Activated CD8-positive, alpha-beta T cell treated with anti-CD3 and anti-CD28 coated beads for 36 hours (primary cell): ENCODE measurements at regions of chr11 and their contacts with region 1.

Region 1: DNA sequence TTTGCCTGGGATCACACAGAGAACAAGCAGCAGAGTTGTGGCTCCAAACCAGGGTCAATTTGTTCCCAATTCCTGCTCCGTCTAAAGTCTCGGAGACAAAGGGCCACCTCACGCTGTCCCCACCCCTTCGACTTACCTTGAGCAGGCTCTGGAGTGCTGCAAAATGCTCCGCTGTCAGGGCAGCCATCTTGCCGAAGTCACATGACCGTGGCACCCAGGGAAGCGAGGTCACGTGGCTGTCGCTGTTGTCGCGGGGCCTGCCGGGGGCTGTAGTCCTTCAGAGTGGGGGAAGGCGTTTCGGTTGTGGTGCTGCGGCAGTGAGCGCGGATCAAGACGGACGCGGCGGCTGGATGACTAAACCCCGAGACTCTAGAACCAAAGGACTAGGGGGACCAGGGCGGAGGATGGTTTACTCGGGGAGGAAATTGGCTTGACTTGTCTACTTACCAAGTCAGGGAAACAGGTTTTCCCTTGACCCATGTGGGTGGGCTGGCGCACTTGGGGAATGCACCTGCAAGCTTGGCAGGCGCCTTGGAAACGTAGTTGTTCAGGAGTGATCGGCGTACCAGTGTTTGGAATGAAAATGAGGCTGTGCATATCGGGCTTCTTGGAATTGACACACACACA is at the start of gene COMMD9:
- DNase-seq: peak; percentile 98
- ATAC-seq: peak; percentile 99
- H3K4me3 Mint-ChIP-seq: peak within 1 kb of the TSS; percentile 82
- H3K27ac Mint-ChIP-seq: peak within 1 kb of the TSS; percentile 86
- H3K4me1 Mint-ChIP-seq: peaks cover 29% of the 10 kb centered on the region
- H3K27me3 Mint-ChIP-seq: no peaks in the 10 kb centered on the region
- CTCF ChIP-seq: no peak
- total RNA-seq, gene COMMD9: 34.8 to 36.8 TPM

Region 2: GRCh38 chr11:36142439-36142838 is 146.9 kb before region 1 on chr11:
- CTCF ChIA-PET with region 1: no interaction called
- POLR2A ChIA-PET with region 1: no interaction called
- intact Hi-C with region 1: no loop called
- DNase-seq: no peak
- ATAC-seq: no peak
- H3K4me3 Mint-ChIP-seq: no peak overlapping the region
- H3K27ac Mint-ChIP-seq: no peak overlapping the region
- H3K4me1 Mint-ChIP-seq: no peaks in the 10 kb centered on the region
- H3K27me3 Mint-ChIP-seq: no peaks in the 10 kb centered on the region
- CTCF ChIP-seq: no peak

Region 3: DNA sequence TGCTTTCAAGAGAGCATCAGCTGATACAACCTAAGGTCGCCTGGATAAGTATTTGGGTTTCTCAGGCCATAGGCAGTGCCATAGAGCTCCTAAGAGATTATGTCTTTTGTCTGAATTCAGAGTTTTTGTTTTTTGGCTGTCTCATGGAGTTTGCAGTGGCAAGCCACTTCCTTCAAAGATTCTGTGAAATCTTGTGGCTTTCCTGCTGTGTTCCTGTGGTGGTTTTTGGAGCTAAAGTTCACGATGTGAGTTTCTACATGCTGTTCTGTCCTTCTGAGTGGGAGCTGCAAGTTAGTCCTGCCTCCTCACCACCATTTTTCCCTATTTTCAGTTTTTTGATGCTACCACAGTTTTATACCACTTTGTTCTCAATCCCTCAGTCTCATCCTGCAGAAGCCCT is 111.5 kb before region 1 on chr11:
- CTCF ChIA-PET with region 1: no interaction called
- POLR2A ChIA-PET with region 1: no interaction called
- intact Hi-C with region 1: no loop called
- DNase-seq: no peak
- ATAC-seq: no peak
- H3K4me3 Mint-ChIP-seq: no peak overlapping the region
- H3K27ac Mint-ChIP-seq: no peak overlapping the region
- H3K4me1 Mint-ChIP-seq: no peaks in the 10 kb centered on the region
- H3K27me3 Mint-ChIP-seq: peaks cover 17% of the 10 kb centered on the region
- CTCF ChIP-seq: no peak

Region 4: DNA sequence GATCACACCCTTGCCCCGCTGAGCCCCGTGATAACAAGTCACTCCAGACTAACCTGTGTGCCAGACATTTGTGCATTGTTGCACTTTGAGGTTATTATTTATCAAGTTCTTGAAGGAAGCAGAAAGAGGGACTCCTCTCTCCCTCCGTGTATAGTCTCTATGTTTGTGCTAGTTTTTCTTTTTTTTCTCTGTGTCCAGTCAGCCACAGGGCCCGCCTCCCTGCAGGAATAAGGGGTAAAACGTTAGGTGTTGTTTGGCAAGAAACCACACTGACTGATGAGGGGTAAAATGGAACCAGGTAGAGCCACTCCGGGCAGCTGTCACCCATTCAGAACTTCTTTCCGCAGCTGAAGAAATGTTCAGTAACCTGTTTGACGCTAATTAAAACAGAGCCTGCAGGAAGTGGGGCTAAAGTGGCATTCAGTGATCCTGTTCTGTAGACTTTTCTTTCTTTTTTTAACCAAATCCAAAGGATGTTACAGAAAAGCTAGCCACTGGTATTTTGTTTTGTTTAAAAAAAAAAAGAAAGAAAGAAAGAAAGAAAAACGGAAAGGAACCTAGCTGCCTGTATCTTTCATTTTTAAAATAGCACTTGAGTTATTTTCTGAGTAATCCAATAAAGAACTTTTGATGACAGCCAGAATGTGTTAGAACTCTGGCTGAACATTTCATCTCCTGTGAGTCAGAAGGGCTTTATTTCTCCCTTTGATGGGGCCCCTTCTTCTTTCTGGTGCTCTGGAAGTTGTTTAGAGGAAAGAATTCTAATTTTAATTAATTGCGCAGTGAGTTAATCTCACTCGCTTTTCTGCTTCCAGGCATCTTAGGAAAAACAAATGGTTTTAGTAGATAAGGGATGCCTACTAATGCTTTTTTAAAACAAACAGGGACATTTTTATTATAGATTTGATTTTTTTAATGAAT is 58.3 kb before region 1 on chr11:
- CTCF ChIA-PET with region 1: no interaction called
- POLR2A ChIA-PET with region 1: no interaction called
- intact Hi-C with region 1: no loop called
- DNase-seq: no peak
- ATAC-seq: no peak
- H3K4me3 Mint-ChIP-seq: no peak overlapping the region
- H3K27ac Mint-ChIP-seq: no peak overlapping the region
- H3K4me1 Mint-ChIP-seq: no peaks in the 10 kb centered on the region
- H3K27me3 Mint-ChIP-seq: no peaks in the 10 kb centered on the region
- CTCF ChIP-seq: no peak

Region 5: GRCh38 chr11:36300651-36301050 is 11.3 kb after region 1 on chr11:
- CTCF ChIA-PET with region 1: interaction called, 21 read pairs
- POLR2A ChIA-PET with region 1: interaction called, 4 read pairs
- intact Hi-C with region 1: no loop called
- DNase-seq: no peak
- ATAC-seq: no peak
- H3K4me3 Mint-ChIP-seq: no peak overlapping the region
- H3K27ac Mint-ChIP-seq: no peak overlapping the region
- H3K4me1 Mint-ChIP-seq: no peaks in the 10 kb centered on the region
- H3K27me3 Mint-ChIP-seq: peaks cover 4% of the 10 kb centered on the region
- CTCF ChIP-seq: no peak

Region 6: GRCh38 chr11:36354221-36355003 is 65.1 kb after region 1 on chr11:
- CTCF ChIA-PET with region 1: interaction called, 23 read pairs
- POLR2A ChIA-PET with region 1: no interaction called
- intact Hi-C with region 1: loop called (anchors 5 kb)
- DNase-seq: no peak
- ATAC-seq: peak; percentile 67
- H3K4me3 Mint-ChIP-seq: no peak overlapping the region
- H3K27ac Mint-ChIP-seq: no peak overlapping the region
- H3K4me1 Mint-ChIP-seq: peaks cover 52% of the 10 kb centered on the region
- H3K27me3 Mint-ChIP-seq: peaks cover 30% of the 10 kb centered on the region
- CTCF ChIP-seq: no peak

Region 7: DNA sequence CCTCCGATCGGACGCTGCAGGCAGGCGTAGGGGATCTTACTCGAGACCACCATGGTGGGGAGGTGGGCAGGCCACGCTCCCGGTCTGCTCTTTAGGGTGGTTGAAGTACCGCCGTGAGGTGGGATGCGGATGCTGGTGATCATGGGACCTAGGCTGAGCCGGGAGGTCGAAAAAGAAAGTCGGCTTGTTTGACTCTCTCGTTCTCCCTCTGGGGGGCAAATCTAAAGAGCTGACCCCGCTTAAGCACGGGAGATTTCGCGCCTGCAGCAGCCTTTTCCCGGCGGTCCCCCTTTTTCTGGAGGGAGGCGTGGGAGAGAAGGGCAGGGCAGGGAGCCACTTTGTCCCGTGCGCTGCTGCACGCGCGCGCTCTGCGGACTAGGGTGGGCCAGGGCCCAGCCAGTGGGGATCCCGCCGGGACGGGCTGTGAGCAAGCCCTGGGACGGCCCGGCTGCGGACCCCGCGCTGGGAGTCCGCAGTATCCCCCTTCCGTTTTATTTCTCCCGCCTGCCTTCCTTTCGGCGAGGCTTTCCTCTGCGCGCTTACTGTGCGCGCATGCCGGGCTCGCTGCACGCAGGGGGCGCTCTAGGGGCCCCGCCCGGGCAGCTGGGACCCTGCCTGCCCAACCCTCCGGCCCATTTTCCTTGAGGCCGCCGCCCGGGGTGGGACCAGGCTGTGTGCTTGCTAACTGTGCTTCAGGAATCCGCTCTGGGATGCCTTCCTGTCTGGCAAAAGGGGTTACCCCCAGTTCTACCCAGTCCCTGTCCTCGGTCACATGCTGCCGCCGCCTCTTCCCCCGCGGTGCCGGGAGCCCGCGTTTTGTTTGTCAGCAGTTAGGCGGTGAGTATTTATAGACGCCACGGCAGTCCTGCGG is 87.8 kb after region 1 on chr11:
- CTCF ChIA-PET with region 1: interaction called, 46 read pairs
- POLR2A ChIA-PET with region 1: no interaction called
- intact Hi-C with region 1: no loop called
- DNase-seq: peak; percentile 70
- ATAC-seq: peak; percentile 65
- H3K4me3 Mint-ChIP-seq: peak overlapping the region; percentile 88
- H3K27ac Mint-ChIP-seq: peak overlapping the region; percentile 79
- H3K4me1 Mint-ChIP-seq: peaks cover 26% of the 10 kb centered on the region
- H3K27me3 Mint-ChIP-seq: peaks cover 58% of the 10 kb centered on the region
- CTCF ChIP-seq: peak; percentile 67

Region 8: DNA sequence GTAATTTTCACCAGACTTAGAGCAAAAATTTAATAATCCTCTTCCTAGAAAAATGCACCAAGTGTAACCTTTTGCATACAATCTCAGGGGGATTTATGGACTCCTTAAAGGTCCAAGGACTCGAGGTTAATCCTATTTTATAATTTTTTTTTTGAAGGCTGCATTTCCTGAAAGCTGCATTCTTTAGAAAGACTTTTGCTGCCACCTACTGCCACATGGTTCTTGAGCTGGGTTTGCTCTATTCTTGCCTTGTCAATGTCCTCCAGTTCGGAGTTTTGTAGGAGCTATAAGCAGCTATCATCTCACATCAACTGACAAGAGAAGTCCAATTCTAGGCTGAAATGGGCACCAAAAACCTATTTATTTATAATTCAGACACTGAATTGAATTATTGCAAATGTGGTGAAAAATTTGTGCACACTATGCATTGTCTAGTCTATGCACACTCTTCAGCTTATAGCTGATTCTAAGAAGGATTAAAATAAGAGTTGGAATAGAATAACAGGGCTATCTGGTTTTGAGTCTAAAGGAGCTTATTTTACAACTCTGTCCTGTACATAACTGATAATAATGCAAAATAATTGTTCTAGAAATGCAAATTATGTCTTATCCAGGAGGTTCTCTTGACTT is 189.5 kb after region 1 on chr11:
- CTCF ChIA-PET with region 1: interaction called, 177 read pairs
- POLR2A ChIA-PET with region 1: interaction called, 6 read pairs
- intact Hi-C with region 1: loop called (anchors 1 kb)
- DNase-seq: peak; percentile 60
- ATAC-seq: peak; percentile 37
- H3K4me3 Mint-ChIP-seq: no peak overlapping the region
- H3K27ac Mint-ChIP-seq: no peak overlapping the region
- H3K4me1 Mint-ChIP-seq: peaks cover 4% of the 10 kb centered on the region
- H3K27me3 Mint-ChIP-seq: no peaks in the 10 kb centered on the region
- CTCF ChIP-seq: peak; percentile 51

Region 9: DNA sequence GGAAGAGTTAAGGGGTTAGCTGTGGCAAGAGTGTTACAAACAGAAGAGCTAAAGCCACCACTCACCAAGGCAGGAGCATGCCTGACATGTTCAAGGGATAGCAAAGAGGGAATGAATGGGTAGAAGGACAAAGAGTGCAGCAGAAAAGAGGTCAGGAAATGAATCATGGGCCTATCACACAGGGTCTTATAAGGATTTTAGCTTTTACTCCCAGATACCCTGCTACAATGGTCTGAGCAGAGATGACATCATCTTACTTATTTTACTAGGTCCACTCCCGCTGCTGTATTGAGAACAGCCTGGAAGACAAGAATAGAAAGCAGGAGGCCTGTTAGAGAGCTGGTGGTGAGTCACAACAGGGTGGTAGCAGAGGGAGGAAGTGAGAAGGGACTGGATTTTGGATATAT is 211.0 kb after region 1 on chr11:
- CTCF ChIA-PET with region 1: interaction called, 163 read pairs
- POLR2A ChIA-PET with region 1: interaction called, 4 read pairs
- intact Hi-C with region 1: no loop called
- DNase-seq: no peak
- ATAC-seq: peak; percentile 74
- H3K4me3 Mint-ChIP-seq: no peak overlapping the region
- H3K27ac Mint-ChIP-seq: peak overlapping the region; percentile 21
- H3K4me1 Mint-ChIP-seq: peaks cover 24% of the 10 kb centered on the region
- H3K27me3 Mint-ChIP-seq: no peaks in the 10 kb centered on the region
- CTCF ChIP-seq: no peak

Region 10: GRCh38 chr11:36509694-36510566 is 220.6 kb after region 1 on chr11 and contains the start of gene TRAF6:
- CTCF ChIA-PET with region 1: interaction called, 14 read pairs
- POLR2A ChIA-PET with region 1: interaction called, 4 read pairs
- intact Hi-C with region 1: no loop called
- DNase-seq: peak; percentile 90
- ATAC-seq: peak; percentile 95
- H3K4me3 Mint-ChIP-seq: peak within 1 kb of the TSS; percentile 95
- H3K27ac Mint-ChIP-seq: peak within 1 kb of the TSS; percentile 85
- H3K4me1 Mint-ChIP-seq: peaks cover 28% of the 10 kb centered on the region
- H3K27me3 Mint-ChIP-seq: peaks cover 2% of the 10 kb centered on the region
- CTCF ChIP-seq: peak; percentile 92
- total RNA-seq, gene TRAF6: 8.8 to 10.3 TPM